Activated T-helper 1 cell treated with anti-CD3 and anti-CD28 coated beads, Interleukin-12 subunit alpha, Interleukin-12 subunit beta, Interleukin-2, Interleukin-4 antibody, amounts not matched to agents 30 ng/mL and 10 ng/mL and 1 ng/mL, durations not matched to agents 14 hours and 24 hours and 36 hours (primary cell): ENCODE measurements at regions of chr10 and their contacts with region 1.

Region 1: GRCh38 chr10:126144675-126145365 is 243.5 kb downstream of the ADAM12 start:
- DNase-seq: no peak
- H3K4me3 Mint-ChIP-seq: no peak overlapping the region
- H3K27ac Mint-ChIP-seq: no peak overlapping the region
- H3K4me1 Mint-ChIP-seq: no peaks in the 10 kb centered on the region
- H3K27me3 Mint-ChIP-seq: peaks cover 2% of the 10 kb centered on the region

Region 2: DNA sequence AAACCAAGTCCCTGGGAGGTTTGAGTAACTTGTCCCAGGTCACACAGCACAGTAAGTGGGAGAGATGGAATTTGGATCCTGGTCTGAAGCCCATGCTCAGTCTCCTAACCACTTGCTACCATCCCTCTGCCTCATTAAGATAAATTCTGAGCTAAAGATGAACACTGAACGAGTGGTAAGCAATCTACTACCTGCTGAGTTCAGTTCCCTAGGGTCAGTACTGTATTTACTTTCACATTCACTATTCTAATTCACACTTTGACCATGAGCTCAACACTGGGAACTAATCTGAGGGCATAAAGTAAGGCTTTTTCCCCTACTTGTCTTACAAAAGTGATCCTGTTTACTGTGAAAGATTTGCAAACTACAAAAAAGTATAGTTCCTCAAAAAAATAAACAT is 324.1 kb before region 1 on chr10:
- intact Hi-C with region 1: no loop called
- DNase-seq: no peak
- H3K4me3 Mint-ChIP-seq: peak overlapping the region; percentile 64
- H3K27ac Mint-ChIP-seq: peak overlapping the region; percentile 10
- H3K4me1 Mint-ChIP-seq: peaks cover 3% of the 10 kb centered on the region
- H3K27me3 Mint-ChIP-seq: no peaks in the 10 kb centered on the region

Region 3: DNA sequence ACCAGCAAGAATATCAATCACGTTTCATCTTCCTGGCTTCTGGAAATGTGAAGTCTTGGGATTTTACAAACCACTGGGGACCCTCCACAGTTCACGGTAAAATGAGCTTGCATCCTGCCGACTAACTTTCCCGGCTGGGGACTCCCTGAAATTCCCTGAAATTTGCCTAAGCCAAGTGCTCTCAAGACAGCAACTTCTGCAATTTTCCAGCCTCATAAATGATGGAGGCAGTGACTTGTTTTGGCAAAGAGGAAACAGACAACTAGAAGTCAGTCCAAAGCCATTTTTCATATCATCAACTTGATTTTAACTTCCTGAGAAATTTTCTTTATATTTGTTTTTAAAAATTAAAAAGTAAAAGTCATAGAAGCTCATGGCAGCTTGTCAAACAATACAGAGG is 36.1 kb before region 1 on chr10:
- intact Hi-C with region 1: loop called (anchors 1 kb)
- DNase-seq: no peak
- H3K4me3 Mint-ChIP-seq: no peak overlapping the region
- H3K27ac Mint-ChIP-seq: no peak overlapping the region
- H3K4me1 Mint-ChIP-seq: no peaks in the 10 kb centered on the region
- H3K27me3 Mint-ChIP-seq: no peaks in the 10 kb centered on the region